Transverse colon (tissue), 4 donors: ENCODE measurements at regions of chr10 and their contacts with region 1.

Region 1: GRCh38 chr10:110547139-110547761 is 20.2 kb upstream of the SMC3 start:
- DNase-seq: no peak
- H3K4me3 ChIP-seq: no peak overlapping the region
- H3K27ac ChIP-seq: no peak overlapping the region
- H3K4me1 ChIP-seq: no peaks in the 10 kb centered on the region
- H3K27me3 ChIP-seq: peaks cover 23% of the 10 kb centered on the region
- CTCF ChIP-seq: peak; percentile 77 to 88 (median 84)
- EP300 ChIP-seq: no peak
- POLR2A ChIP-seq: no peak

Region 2: DNA sequence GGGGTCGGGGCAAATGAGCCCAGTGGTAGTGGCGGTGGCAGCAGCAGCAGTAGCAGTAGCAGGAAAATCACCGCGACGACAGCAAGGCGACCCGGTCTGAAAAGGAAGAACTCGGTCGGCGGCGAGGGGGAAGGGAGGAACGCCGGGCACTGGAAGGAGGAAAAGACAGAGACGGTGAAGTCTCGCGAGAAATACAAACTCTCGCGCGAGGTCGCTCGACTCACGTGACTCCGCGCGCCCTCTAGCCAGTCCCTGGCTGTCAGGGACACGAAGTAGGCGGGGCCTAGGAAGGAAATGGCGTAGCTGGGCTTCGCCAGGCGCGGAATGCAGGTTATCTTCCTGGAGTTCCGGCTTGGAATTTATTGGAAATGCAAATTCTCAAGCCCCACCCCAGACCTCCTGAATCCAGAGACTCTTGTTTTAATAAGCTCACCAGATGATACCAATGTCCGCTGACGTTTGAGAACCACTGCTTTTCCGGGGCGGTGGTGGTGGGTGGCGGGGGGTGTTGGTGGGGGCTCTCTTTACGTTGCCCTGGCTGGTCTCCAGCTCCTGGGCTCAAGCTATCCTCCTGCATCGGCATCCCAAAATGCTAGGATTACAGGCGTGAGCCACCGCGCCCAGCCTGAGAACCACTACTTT is 242.3 kb before region 1 on chr10 and contains the start of gene SMNDC1:
- in situ Hi-C with region 1: loop called (anchors 5 to 25 kb)
- intact Hi-C with region 1: loop called (anchors 5 kb)
- DNase-seq: peak; percentile 99
- H3K4me3 ChIP-seq: peak within 1 kb of the TSS; percentile 78 to 99 (median 95)
- H3K27ac ChIP-seq: peak within 1 kb of the TSS; percentile 92 to 98 (median 96)
- H3K4me1 ChIP-seq: peaks cover 8 to 54% (median 23%) of the 10 kb centered on the region in 4 donors
- H3K27me3 ChIP-seq: peaks cover 3% of the 10 kb centered on the region
- CTCF ChIP-seq: no peak
- EP300 ChIP-seq: no peak
- POLR2A ChIP-seq: peak; percentile 81
- total RNA-seq, gene SMNDC1: 3.6 to 15.7 (median 8.9) TPM

Region 3: GRCh38 chr10:110311357-110311949 is 235.8 kb before region 1 on chr10:
- in situ Hi-C with region 1: loop called (anchors 5 to 25 kb)
- intact Hi-C with region 1: loop called (anchors 5 kb)
- DNase-seq: peak; percentile 43
- H3K4me3 ChIP-seq: no peak overlapping the region
- H3K27ac ChIP-seq: no peak overlapping the region
- H3K4me1 ChIP-seq: peaks cover 0 to 16% (median 2%) of the 10 kb centered on the region in 4 donors
- H3K27me3 ChIP-seq: peaks cover 23% of the 10 kb centered on the region
- CTCF ChIP-seq: peak; percentile 56 to 83 (median 58)
- EP300 ChIP-seq: no peak
- POLR2A ChIP-seq: no peak

Region 4: DNA sequence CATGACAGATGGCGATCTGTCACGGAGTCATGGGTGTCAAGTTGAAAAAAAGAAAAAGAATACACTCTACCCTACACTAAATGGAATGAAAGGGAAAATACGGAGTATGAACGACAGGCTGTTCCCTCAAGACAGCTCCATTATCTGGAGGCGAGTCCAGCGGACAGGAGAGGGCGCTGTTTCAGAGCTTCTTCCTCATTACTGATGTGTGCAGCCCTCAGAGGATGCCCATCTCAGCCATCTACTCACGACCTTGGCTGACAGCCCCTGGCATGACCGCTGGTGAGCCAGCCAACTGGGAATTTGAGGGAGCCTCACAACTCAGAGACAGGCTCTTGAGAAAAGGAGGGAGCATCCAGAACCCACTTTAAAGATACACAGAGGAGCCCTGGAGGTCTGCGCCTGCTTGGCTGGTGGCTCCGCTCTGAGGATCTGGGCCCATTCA is 192.9 kb before region 1 on chr10:
- in situ Hi-C with region 1: loop called in 2 of 4 experiments (anchors 5 to 10 kb)
- intact Hi-C with region 1: no loop called
- DNase-seq: peak; percentile 91
- H3K4me3 ChIP-seq: no peak overlapping the region
- H3K27ac ChIP-seq: peak overlapping the region in 3 of 4 donors; percentile 13 to 55 (median 42)
- H3K4me1 ChIP-seq: peaks cover 3 to 17% (median 12%) of the 10 kb centered on the region in 4 donors
- H3K27me3 ChIP-seq: peaks cover 3% of the 10 kb centered on the region
- CTCF ChIP-seq: peak; percentile 62 to 88 (median 79)
- EP300 ChIP-seq: no peak
- POLR2A ChIP-seq: no peak

Region 5: DNA sequence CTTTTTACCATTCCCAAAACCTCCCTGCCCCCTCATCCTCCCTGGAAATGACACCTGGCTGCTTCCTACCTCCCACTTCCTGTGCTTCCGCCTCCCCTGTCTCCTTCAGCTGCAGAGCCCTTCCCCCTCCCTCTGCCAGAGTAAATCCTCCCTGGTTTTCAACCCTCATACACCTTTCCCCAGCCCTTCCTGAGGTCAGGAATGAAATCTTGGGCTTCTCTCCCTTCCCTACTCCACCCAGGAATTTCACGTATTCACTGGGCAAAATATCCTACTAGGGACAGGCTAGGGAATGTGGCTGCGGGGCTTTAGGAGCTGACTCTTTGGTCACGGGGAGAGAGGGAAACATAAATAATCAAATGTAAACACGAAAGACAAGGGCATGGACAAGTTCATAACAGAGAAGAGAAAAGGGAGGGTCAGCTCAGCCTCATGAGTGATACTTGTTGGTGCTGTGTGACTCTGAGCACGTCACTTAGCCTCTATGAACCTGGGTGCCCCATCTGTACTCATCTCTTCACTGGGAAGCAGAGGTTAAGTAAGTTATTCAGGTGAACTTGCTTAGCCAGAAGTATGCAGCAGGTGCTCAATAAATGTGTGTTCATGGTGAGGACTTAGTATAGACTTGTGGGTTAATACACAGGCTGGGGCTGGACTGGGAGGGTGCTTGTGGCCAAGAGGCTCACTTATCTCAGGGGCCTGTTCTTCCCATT is 59.7 kb before region 1 on chr10:
- in situ Hi-C with region 1: no loop called
- intact Hi-C with region 1: no loop called
- DNase-seq: no peak
- H3K4me3 ChIP-seq: no peak overlapping the region
- H3K27ac ChIP-seq: peak overlapping the region in 1 of 4 donors; percentile 18
- H3K4me1 ChIP-seq: no peaks in the 10 kb centered on the region
- H3K27me3 ChIP-seq: peaks cover 32% of the 10 kb centered on the region
- CTCF ChIP-seq: no peak
- EP300 ChIP-seq: no peak
- POLR2A ChIP-seq: no peak

Region 6: DNA sequence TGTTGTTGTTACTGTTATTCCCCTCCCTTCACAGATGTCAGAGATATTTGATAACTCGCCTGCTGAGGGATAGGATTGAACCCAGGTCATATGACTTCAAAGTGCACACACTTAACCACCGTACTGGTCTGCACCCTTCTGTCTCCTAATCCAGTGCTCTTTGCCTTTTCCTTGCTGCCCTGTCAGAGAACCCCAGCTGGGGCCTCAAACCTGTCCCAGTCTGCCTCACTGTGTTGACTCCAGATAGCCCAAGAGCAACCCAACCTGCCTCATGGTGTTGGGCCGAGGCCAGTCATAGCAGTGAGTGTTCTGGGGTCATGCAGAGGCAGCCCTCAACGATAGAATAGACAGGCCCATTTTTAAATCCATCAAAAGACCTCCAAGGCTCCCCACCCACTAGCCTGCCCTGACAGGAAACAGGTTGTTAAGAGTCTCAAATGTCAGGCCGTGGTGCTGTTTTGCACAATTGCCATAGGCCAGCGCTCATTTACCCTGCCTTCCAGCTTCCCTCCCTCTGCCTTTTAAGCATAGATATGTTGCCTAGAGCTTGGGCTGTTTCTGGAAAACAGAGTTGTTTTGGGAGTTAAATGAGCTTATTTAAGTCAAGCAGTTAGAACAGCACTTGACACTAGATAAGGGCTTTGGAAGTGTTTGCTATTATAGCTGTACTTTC is 287.5 kb after region 1 on chr10:
- in situ Hi-C with region 1: no loop called
- intact Hi-C with region 1: no loop called
- DNase-seq: peak; percentile 21
- H3K4me3 ChIP-seq: no peak overlapping the region
- H3K27ac ChIP-seq: peak overlapping the region; percentile 80 to 91 (median 90)
- H3K4me1 ChIP-seq: peaks cover 38 to 58% (median 48%) of the 10 kb centered on the region in 4 donors
- H3K27me3 ChIP-seq: no peaks in the 10 kb centered on the region
- CTCF ChIP-seq: no peak
- EP300 ChIP-seq: no peak
- POLR2A ChIP-seq: no peak

Region 7: GRCh38 chr10:111370101-111370500 is 822.9 kb after region 1 on chr10:
- in situ Hi-C with region 1: no loop called
- intact Hi-C with region 1: no loop called
- DNase-seq: no peak
- H3K4me3 ChIP-seq: no peak overlapping the region
- H3K27ac ChIP-seq: no peak overlapping the region
- H3K4me1 ChIP-seq: no peaks in the 10 kb centered on the region
- H3K27me3 ChIP-seq: no peaks in the 10 kb centered on the region
- CTCF ChIP-seq: no peak
- EP300 ChIP-seq: no peak
- POLR2A ChIP-seq: no peak